ENCODE measurements at regions of chr2 and their contacts with region 1.

Region 1: GRCh38 chr2:208033758-208034502 is 8.6 kb upstream of the PLEKHM3 start:
- DNase-seq: peak; percentile 66
- ATAC-seq: peak; percentile 86 to 91
- H3K4me3 ChIP-seq: no peak overlapping the region
- H3K27ac ChIP-seq: no peak overlapping the region
- H3K4me1 ChIP-seq: peaks cover 22% of the 10 kb centered on the region
- H3K27me3 ChIP-seq: no peaks in the 10 kb centered on the region
- CTCF ChIP-seq: peak; percentile 57

Region 2: GRCh38 chr2:207769597-207770486 is 264.1 kb before region 1 on chr2 and contains the start of gene FZD5:
- intact Hi-C with region 1: loop called (anchors 10 kb)
- DNase-seq: peak; percentile 99
- ATAC-seq: peak; percentile 91 to 96
- H3K4me3 ChIP-seq: peak within 1 kb of the TSS; percentile 84
- H3K27ac ChIP-seq: peak within 1 kb of the TSS; percentile 85
- H3K4me1 ChIP-seq: peaks cover 28% of the 10 kb centered on the region
- H3K27me3 ChIP-seq: no peaks in the 10 kb centered on the region
- CTCF ChIP-seq: peak; percentile 62
- total RNA-seq, gene FZD5: 37.1 TPM

Measured in lower lobe of right lung (tissue), 2 donors.